Common myeloid progenitor, CD34-positive (primary cell): ENCODE measurements at regions of chr20 and their contacts with region 1.

Region 1: GRCh38 chr20:38645980-38646858 is 44.6 kb downstream of the ARHGAP40 start:
- DNase-seq: peak; percentile 82 to 90 (median 88)
- H3K4me3 ChIP-seq: peak overlapping the region in 4 of 7 experiments; percentile 32 to 67 (median 61)
- H3K27ac ChIP-seq: no peak overlapping the region
- H3K4me1 ChIP-seq: peaks cover 0 to 8% (median 5%) of the 10 kb centered on the region in 4 experiments
- H3K27me3 ChIP-seq: peaks cover 0 to 60% (median 20%) of the 10 kb centered on the region in 5 experiments

Region 2: GRCh38 chr20:38620441-38620840 is 25.8 kb before region 1 on chr20:
- CTCF ChIA-PET with region 1: no interaction called
- POLR2A ChIA-PET with region 1: no interaction called
- DNase-seq: no peak
- H3K4me3 ChIP-seq: no peak overlapping the region
- H3K27ac ChIP-seq: no peak overlapping the region
- H3K4me1 ChIP-seq: no peaks in the 10 kb centered on the region
- H3K27me3 ChIP-seq: peaks cover 0 to 49% (median 12%) of the 10 kb centered on the region in 5 experiments

Region 3: GRCh38 chr20:38692436-38693411 is 46.5 kb after region 1 on chr20:
- CTCF ChIA-PET with region 1: no interaction called
- POLR2A ChIA-PET with region 1: no interaction called
- DNase-seq: peak; percentile 60 to 84 (median 77)
- H3K4me3 ChIP-seq: no peak overlapping the region
- H3K27ac ChIP-seq: no peak overlapping the region
- H3K4me1 ChIP-seq: no peaks in the 10 kb centered on the region
- H3K27me3 ChIP-seq: peaks cover 0 to 21% (median 6%) of the 10 kb centered on the region in 5 experiments

Region 4: GRCh38 chr20:38723017-38723847 is 77.0 kb after region 1 on chr20:
- CTCF ChIA-PET with region 1: interaction called, 13 read pairs
- POLR2A ChIA-PET with region 1: no interaction called
- DNase-seq: peak in 2 of 3 donors; percentile 70 to 78
- H3K4me3 ChIP-seq: peak overlapping the region in 3 of 7 experiments; percentile 4 to 40 (median 39)
- H3K27ac ChIP-seq: no peak overlapping the region
- H3K4me1 ChIP-seq: peaks cover 0 to 50% (median 29%) of the 10 kb centered on the region in 4 experiments
- H3K27me3 ChIP-seq: peaks cover 7 to 100% (median 74%) of the 10 kb centered on the region in 5 experiments